ENCODE measurements at regions of chr19 and their contacts with region 1.

Region 1: GRCh38 chr19:45153339-45154063 is 7.3 kb downstream of the NKPD1 start:
- H3K4me3 ChIP-seq: no peak overlapping the region
- H3K27ac ChIP-seq: no peak overlapping the region
- H3K4me1 ChIP-seq: peaks cover 2% of the 10 kb centered on the region; the same call in 1 of the 2 replicates
- CTCF ChIP-seq: no peak

Region 2: GRCh38 chr19:45117669-45118068 is 35.8 kb before region 1 on chr19:
- CTCF ChIA-PET with region 1: no interaction called
- POLR2A ChIA-PET with region 1: no interaction called
- H3K4me3 ChIP-seq: no peak overlapping the region
- H3K27ac ChIP-seq: 0 out of 2 replicates have a peak overlapping the region, but pooled peaks have one; percentile 31
- H3K4me1 ChIP-seq: peaks cover 26% of the 10 kb centered on the region
- CTCF ChIP-seq: no peak

Region 3: DNA sequence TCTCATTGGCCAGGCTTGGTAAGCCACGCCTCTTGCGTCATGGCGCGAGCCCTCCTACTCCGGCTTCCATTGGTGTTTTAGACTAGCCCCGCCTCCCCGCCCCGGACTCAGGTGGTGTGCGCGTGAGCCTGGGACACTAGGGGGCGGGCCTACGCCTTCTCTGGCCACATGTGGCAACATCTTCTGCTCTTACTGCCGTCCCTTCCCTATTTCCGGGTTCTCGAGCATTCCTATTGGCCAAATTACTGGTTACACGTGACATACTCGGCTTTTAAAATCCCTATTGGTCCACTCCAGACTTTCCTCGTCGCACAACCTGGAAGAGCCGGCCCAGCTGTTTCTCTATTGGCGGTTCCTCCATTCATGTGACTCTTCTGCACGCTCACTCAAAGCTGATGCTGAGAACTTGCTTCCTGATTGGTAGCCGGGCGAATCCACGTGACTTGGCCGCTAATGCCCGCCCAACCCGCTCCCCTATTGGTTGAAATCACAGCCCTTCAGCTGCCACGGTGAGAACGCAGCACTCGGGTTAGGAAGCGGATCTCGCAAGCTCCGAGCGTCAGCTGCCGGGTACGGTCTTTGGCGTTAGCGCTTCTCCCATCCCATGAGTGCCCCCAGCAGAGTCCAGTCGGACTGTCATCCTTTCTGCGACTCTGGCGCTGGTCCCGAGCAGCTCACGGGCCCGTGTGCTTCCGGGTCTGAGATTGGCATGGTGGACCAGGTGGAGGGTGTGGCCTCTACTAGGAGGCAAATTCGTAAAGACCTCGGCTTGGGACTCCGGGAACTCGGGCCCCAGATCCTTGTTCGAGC is 25.0 kb after region 1 on chr19 and contains the start of gene BLOC1S3:
- CTCF ChIA-PET with region 1: interaction called, 6 read pairs
- POLR2A ChIA-PET with region 1: interaction called, 11 read pairs
- H3K4me3 ChIP-seq: peak within 1 kb of the TSS; percentile 83
- H3K27ac ChIP-seq: peak within 1 kb of the TSS; percentile 85
- H3K4me1 ChIP-seq: peaks cover 8% of the 10 kb centered on the region
- CTCF ChIP-seq: peak; percentile 97